Heart right ventricle (tissue), 16 donors: ENCODE measurements at regions of chr20 and their contacts with region 1.

Region 1: GRCh38 chr20:41308290-41308711 is 9.2 kb downstream of the ZHX3 start:
- DNase-seq: no peak
- ATAC-seq: peak in 6 of 8 donors; percentile 17 to 49 (median 24)
- H3K4me3 ChIP-seq: no peak overlapping the region
- H3K27ac ChIP-seq: peak overlapping the region in 7 of 10 donors; percentile 15 to 77 (median 30)
- H3K4me1 ChIP-seq: peaks cover 2 to 77% (median 37%) of the 10 kb centered on the region in 9 donors
- H3K27me3 ChIP-seq: no peaks in the 10 kb centered on the region
- CTCF ChIP-seq: no peak

Region 2: DNA sequence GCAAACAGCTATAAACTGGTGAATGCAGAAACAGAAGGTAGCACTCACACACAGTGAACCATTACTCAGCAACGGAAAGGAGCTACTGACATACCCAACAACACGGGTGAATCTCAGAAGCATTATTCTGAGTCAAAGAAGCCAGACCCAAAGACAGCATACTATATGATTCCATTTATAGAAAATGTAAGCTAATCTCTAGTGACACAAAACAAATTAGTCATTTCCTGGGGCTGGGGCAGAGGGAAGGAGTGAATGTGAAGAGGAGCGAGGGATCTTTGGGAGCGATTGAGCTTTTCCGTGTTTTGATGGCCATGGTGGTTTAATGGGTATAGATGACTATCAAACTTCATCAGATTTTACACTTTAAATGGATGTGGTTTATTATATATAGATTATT is 1731.5 kb before region 1 on chr20:
- intact Hi-C with region 1: loop called in 1 of 10 experiments (anchors 5 kb)
- DNase-seq: no peak
- ATAC-seq: no peak
- H3K4me3 ChIP-seq: no peak overlapping the region
- H3K27ac ChIP-seq: no peak overlapping the region
- H3K4me1 ChIP-seq: no peaks in the 10 kb centered on the region
- H3K27me3 ChIP-seq: peaks cover 0 to 28% (median 0%) of the 10 kb centered on the region in 7 donors
- CTCF ChIP-seq: no peak

Region 3: DNA sequence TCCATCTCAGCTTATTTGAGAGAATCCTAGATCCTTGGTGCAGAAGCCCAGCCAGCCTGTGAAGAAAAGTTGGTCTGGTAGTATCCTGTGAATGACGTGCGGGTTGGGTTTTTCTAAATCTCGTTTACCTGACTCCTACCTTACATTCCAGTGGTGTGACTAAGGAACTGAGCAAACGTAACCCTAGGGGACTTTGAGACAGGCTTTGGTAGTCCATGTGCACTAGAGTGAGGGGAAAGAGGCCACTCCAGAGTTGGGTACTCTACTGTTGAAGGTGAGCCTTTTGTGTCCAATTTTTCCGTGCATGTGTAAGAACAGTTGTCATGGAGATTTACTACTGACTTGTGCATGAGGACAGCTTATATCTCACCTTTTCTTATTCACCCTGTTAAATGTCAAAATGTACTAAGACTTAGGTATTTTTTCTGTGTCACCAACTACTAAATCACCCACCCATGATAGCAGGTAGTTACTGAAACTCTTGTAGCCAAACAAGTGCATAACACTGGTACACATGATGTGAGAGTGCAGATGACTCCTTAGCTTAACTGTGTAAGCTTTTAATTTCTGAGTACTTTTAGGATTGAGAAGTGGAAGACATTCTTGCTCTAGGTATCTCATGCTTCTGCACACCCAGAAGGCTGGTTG is 197.2 kb before region 1 on chr20:
- intact Hi-C with region 1: no loop called
- DNase-seq: no peak
- ATAC-seq: no peak
- H3K4me3 ChIP-seq: no peak overlapping the region
- H3K27ac ChIP-seq: no peak overlapping the region
- H3K4me1 ChIP-seq: no peaks in the 10 kb centered on the region
- H3K27me3 ChIP-seq: no peaks in the 10 kb centered on the region
- CTCF ChIP-seq: no peak

Region 4: DNA sequence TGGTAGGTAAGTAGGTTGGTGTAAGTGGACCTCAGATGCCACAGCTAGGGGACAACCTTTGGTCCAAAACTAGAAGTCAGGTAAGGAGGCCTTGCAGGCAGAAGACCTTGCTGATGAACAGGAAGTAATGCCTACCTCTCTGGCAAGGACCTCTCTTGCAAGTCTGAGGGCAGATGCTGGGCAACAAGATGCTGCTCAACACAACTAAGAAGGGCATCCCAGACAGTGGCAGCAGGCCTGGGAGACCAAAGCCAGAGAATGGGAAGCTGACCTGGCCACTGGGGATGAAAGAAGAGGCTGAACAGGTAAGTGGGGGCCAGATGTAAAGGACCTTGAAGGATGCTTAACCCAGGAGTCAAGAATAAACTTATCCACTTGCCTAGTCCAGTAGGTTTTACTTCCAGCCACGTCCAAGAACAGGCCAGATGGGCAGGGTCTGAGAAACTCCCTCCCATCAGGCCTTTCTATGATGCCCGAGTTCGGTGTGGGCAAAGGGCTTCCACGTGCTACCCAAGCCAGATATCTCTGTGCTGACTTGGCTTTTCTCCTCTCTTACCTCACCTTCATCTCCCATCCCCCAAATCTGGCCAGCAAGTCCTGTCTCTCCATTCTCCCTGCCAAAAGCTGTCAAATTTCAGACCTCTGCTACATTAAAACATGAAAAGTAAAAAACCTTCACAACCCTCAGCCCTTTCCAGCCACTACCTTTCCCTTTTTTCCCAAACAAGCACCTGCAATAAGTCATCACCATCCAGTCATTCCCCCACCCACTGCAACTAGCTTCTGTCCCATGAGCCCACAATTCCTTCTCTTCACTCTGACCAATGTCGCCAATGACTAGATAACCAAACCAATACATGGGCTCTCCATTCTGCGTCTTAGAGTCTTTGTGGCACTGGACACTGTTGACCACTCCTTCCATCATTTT is 182.5 kb before region 1 on chr20:
- intact Hi-C with region 1: no loop called
- DNase-seq: no peak
- ATAC-seq: peak in 6 of 8 donors; percentile 17 to 49 (median 30)
- H3K4me3 ChIP-seq: no peak overlapping the region
- H3K27ac ChIP-seq: no peak overlapping the region
- H3K4me1 ChIP-seq: peaks cover 0 to 3% (median 0%) of the 10 kb centered on the region in 9 donors
- H3K27me3 ChIP-seq: no peaks in the 10 kb centered on the region
- CTCF ChIP-seq: no peak

Region 5: GRCh38 chr20:41275301-41275731 is 33.0 kb before region 1 on chr20:
- intact Hi-C with region 1: loop called in 1 of 10 experiments (anchors 5 kb)
- DNase-seq: no peak
- ATAC-seq: no peak
- H3K4me3 ChIP-seq: no peak overlapping the region
- H3K27ac ChIP-seq: peak overlapping the region in 6 of 10 donors; percentile 34 to 85 (median 74)
- H3K4me1 ChIP-seq: peaks cover 0 to 77% (median 46%) of the 10 kb centered on the region in 9 donors
- H3K27me3 ChIP-seq: no peaks in the 10 kb centered on the region
- CTCF ChIP-seq: no peak